ENCODE measurements at regions of chr11 and their contacts with region 1.

Region 1: DNA sequence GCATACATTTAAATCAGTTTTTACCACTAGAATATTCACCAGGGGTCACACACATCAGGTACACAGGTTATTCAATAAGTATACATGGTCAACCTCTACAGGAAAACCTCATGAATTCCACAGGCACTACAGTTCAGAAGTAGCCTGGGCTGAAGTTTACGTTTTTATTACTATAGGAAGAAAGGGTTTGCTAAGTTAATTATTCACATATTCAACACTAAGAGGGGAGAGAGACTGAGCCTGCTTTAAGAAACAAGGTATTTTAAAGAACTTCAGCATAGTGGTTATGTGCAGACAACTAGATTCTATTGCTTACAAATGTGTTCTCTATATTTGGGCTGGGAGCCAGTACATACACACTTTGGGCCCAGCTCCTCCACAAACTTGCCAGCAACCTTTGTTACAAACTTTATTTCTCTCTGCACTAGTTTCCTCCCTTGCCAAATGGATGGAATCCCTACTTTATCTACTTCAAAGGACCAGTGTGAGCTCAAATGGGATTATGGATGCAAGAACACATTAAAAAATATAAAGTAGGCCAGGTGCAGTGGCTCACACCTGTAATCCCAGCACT is 31.9 kb downstream of the IL18BP start:
- DNase-seq: no peak

Region 2: GRCh38 chr11:72040726-72041441 is 10.3 kb after region 1 on chr11:
- CTCF ChIA-PET with region 1: interaction called, 14 read pairs
- POLR2A ChIA-PET with region 1: interaction called, 6 read pairs
- DNase-seq: peak; percentile 81

Region 3: GRCh38 chr11:72069787-72070251 is 39.3 kb after region 1 on chr11:
- CTCF ChIA-PET with region 1: no interaction called
- POLR2A ChIA-PET with region 1: no interaction called
- DNase-seq: no peak

Region 4: GRCh38 chr11:72080975-72081644 is 50.6 kb after region 1 on chr11:
- CTCF ChIA-PET with region 1: interaction called, 31 read pairs
- POLR2A ChIA-PET with region 1: no interaction called
- DNase-seq: no peak

Region 5: DNA sequence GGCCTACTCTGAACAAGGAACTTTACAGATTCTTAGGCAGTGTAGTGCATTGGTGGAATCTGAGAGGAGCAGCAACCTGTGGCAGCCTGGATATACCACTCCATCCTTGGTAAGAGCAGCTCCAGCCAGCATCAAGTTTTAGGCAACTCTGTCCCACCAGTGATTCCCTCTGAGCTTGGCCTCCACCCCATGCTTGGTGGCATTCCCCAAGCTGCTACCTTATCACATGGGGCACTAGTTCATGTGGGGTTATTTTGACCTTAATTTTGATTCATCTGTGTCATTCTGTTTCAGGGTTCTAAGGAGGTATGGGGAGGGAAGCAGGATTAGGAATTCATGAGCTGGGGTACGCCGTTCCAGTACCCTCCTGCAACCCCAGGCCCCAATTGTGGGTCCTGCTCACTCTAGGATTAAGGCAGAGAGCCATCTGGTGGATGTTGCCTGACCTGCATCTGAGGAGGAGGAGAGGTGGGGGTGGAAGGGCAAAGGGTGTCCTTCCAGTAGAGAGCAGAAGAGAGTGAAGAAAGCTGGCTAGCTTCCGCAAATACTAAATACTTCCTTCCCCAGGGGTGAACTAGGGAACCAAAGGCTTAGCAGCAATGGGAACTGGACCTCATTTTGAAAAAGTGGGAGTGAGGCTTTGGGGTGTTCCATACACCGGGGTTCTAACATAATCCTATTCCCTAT is 60.6 kb after region 1 on chr11:
- CTCF ChIA-PET with region 1: interaction called, 38 read pairs
- POLR2A ChIA-PET with region 1: interaction called, 11 read pairs
- DNase-seq: peak; percentile 73

Region 6: GRCh38 chr11:72144807-72145560 is 114.4 kb after region 1 on chr11:
- CTCF ChIA-PET with region 1: interaction called, 16 read pairs
- POLR2A ChIA-PET with region 1: no interaction called
- DNase-seq: no peak

Measured in HEK293T (cell line).